HCT116 (cell line): ENCODE measurements at regions of chr2 and their contacts with region 1.

Region 1: GRCh38 chr2:70861777-70862625 is 26.4 kb upstream of the CD207 start:
- DNase-seq: peak; percentile 71
- ATAC-seq: peak; percentile 97
- H3K4me3 ChIP-seq: no peak overlapping the region; a peak in 1 of 4 replicates
- H3K27ac ChIP-seq: no peak overlapping the region
- H3K4me1 ChIP-seq: peaks cover 0 to 3% of the 10 kb centered on the region in 2 experiments; a peak in 1 of 4 replicates
- H3K27me3 ChIP-seq: no peaks in the 10 kb centered on the region
- CTCF ChIP-seq: peak; percentile 98 to 99 (median 99)
- POLR2A ChIP-seq: no peak
- RAD21 ChIP-seq: peak; percentile 92

Region 2: DNA sequence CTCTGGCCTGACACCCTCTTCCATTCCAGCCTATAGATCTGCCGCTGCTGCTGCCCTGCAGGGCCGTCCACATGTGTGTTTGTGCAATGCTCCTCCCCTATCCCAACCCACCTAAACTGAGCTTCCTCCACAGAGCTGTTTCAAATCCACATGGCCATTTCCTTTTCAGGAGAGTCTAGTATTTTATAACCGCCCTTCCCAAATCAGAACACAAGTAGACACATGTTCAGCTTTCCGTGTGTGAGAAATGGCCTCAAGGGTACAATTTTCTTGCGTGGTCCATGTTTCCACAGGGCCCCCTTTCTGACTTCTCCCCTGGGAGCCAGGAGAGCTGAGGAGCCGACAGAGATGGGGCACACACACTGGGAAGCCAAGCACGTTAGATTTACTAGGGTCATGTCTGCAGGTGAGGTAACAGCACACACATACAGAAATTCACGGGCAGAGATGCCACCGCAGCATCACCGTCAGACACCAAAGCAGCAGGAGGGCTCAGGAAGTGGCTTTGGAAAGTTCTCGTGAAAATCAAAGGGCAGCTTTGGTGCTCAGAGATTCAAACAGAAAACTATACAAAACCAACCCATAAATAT is 205.5 kb before region 1 on chr2:
- CTCF ChIA-PET with region 1: interaction called, 3 read pairs
- POLR2A ChIA-PET with region 1: no interaction called
- RAD21 ChIA-PET with region 1: no interaction called
- intact Hi-C with region 1: loop called (anchors 5 kb)
- DNase-seq: no peak
- ATAC-seq: no peak
- H3K4me3 ChIP-seq: no peak overlapping the region
- H3K27ac ChIP-seq: no peak overlapping the region
- H3K4me1 ChIP-seq: no peaks in the 10 kb centered on the region
- H3K27me3 ChIP-seq: no peaks in the 10 kb centered on the region
- CTCF ChIP-seq: no peak
- POLR2A ChIP-seq: no peak
- RAD21 ChIP-seq: no peak

Region 3: GRCh38 chr2:72483346-72483745 is 1621.3 kb after region 1 on chr2:
- CTCF ChIA-PET with region 1: no interaction called
- POLR2A ChIA-PET with region 1: no interaction called
- RAD21 ChIA-PET with region 1: no interaction called
- intact Hi-C with region 1: no loop called
- DNase-seq: no peak
- ATAC-seq: no peak
- H3K4me3 ChIP-seq: no peak overlapping the region
- H3K27ac ChIP-seq: no peak overlapping the region
- H3K4me1 ChIP-seq: no peaks in the 10 kb centered on the region
- H3K27me3 ChIP-seq: no peaks in the 10 kb centered on the region
- CTCF ChIP-seq: no peak
- POLR2A ChIP-seq: no peak
- RAD21 ChIP-seq: no peak